Activated CD4-positive, alpha-beta memory T cell treated with anti-CD3 and anti-CD28 coated beads for 36 hours (primary cell): ENCODE measurements at regions of chr11 and their contacts with region 1.

Region 1: GRCh38 chr11:34357701-34358257 is at the start of gene ABTB2:
- DNase-seq: peak; percentile 98
- H3K4me3 Mint-ChIP-seq: peak within 1 kb of the TSS; percentile 77
- H3K27ac Mint-ChIP-seq: no peak within 1 kb of the TSS
- H3K4me1 Mint-ChIP-seq: peaks cover 28% of the 10 kb centered on the region
- H3K27me3 Mint-ChIP-seq: peaks cover 37% of the 10 kb centered on the region
- total RNA-seq, gene ABTB2: 1.8 to 1.9 TPM

Region 2: DNA sequence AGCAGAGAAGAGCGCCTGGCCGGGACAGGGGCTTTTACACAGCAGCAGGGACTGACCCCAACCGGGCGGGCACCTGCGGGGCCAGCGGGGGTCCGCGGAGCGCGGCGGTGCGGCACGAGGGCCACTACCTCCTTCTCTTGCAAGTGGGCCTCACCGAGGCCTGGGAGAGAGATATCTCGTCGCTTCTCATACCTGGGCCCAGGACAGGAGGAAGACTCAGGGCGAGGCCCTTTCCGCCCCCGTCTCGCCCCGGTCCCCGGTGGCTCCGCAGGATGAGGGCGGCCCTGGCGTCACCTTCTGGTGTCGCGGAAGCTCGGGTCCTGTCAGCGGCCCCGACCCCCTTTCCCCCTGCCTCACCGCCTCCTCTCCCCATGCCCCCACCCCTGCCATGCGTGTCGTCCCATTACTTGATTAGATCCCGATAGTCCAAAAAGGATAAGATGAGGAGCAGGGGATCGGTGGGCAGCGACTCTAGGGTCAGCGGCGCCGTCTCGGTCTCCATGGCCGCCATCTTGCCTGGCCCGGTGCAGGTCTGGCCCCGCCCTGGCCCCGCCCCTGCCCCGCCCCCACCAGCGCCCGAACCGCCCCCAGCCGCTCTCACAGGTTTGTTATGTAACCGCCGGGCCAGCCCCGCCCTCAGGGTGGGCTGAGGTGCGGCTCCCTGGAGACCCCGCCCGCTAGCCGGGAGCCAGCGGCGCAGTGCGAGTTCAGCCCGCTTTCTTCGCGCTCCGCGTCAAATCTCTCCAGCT is 583.6 kb before region 1 on chr11 and contains the start of gene FBXO3:
- CTCF ChIA-PET with region 1: no interaction called
- POLR2A ChIA-PET with region 1: no interaction called
- intact Hi-C with region 1: loop called (anchors 1 kb)
- DNase-seq: peak; percentile 84
- H3K4me3 Mint-ChIP-seq: peak within 1 kb of the TSS; percentile 95
- H3K27ac Mint-ChIP-seq: peak within 1 kb of the TSS; percentile 89
- H3K4me1 Mint-ChIP-seq: peaks cover 48% of the 10 kb centered on the region
- H3K27me3 Mint-ChIP-seq: peaks cover 8% of the 10 kb centered on the region
- total RNA-seq, gene FBXO3: 16.5 to 17.7 TPM

Region 3: GRCh38 chr11:33996498-33997454 is 361.0 kb before region 1 on chr11:
- CTCF ChIA-PET with region 1: interaction called, 12 read pairs
- POLR2A ChIA-PET with region 1: no interaction called
- intact Hi-C with region 1: loop called (anchors 1 kb)
- DNase-seq: peak; percentile 81
- H3K4me3 Mint-ChIP-seq: no peak overlapping the region
- H3K27ac Mint-ChIP-seq: no peak overlapping the region
- H3K4me1 Mint-ChIP-seq: peaks cover 11% of the 10 kb centered on the region
- H3K27me3 Mint-ChIP-seq: peaks cover 16% of the 10 kb centered on the region

Region 4: DNA sequence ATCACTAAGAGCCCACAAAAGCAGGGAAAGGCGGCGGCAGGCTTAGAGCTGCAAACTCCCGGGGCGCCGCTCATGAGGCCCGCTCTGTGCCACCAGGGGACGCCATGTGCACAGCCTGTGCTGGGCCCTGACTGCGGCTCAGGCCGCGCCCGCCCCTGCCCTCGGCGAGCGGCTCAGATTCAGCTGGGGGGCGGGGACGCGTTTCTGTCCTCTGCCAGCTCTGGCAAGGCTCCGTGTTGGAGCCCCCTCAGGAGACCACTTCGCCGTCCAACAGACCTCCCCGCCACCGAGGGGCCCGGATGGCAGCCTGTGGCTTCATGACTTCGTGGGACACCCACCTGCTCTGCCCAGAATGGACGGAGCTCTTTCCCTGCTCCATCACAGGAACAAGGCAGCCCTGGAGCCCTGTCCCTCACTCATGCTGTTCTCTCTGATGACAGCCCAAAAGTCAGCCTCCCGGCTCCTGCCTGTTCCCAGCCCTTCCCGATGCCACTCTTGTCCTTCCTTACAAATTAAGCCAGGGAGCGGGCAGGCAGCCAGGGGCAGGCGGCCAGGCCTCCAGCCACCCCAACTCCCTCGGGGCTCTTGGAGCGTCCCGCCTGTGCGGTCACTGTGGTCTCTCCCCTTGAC is 183.3 kb before region 1 on chr11:
- CTCF ChIA-PET with region 1: interaction called, 167 read pairs
- POLR2A ChIA-PET with region 1: interaction called, 10 read pairs
- intact Hi-C with region 1: loop called (anchors 1 kb)
- DNase-seq: peak; percentile 88
- H3K4me3 Mint-ChIP-seq: no peak overlapping the region
- H3K27ac Mint-ChIP-seq: no peak overlapping the region
- H3K4me1 Mint-ChIP-seq: peaks cover 15% of the 10 kb centered on the region
- H3K27me3 Mint-ChIP-seq: peaks cover 2% of the 10 kb centered on the region

Region 5: GRCh38 chr11:34243726-34244464 is 113.9 kb before region 1 on chr11:
- CTCF ChIA-PET with region 1: interaction called, 3 read pairs
- POLR2A ChIA-PET with region 1: interaction called, 3 read pairs
- intact Hi-C with region 1: loop called (anchors 2 kb)
- DNase-seq: peak; percentile 83
- H3K4me3 Mint-ChIP-seq: no peak overlapping the region
- H3K27ac Mint-ChIP-seq: peak overlapping the region; percentile 38
- H3K4me1 Mint-ChIP-seq: peaks cover 74% of the 10 kb centered on the region
- H3K27me3 Mint-ChIP-seq: peaks cover 5% of the 10 kb centered on the region

Region 6: DNA sequence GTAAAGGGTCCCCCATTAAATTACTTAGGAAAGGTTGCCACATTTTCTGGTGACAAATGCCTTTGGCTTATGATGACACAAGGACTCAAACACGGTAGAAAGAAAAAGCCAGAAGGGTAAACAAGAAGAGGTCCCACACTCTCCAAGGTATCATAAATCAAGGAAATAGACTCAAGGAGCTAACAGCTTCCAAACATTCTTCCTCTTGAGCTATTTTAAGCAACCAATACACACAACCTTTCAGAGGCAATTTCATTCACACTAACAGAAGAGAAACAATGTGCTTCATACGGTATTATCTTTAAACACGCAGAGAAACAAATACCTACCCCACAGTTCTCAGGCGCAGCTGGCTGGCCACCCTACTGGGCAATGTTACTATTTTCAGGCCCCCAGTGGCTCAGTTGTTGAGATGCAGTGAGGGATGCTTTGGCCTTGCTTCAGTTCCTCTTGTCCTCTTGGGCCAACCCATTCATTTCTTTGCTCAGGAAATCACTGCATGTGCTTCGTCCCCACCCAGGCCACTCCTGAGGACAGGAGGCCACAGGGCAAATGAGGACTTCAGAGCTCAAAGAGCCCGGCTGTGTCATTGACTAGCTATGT is 15.7 kb before region 1 on chr11:
- CTCF ChIA-PET with region 1: no interaction called
- POLR2A ChIA-PET with region 1: no interaction called
- intact Hi-C with region 1: no loop called
- DNase-seq: no peak
- H3K4me3 Mint-ChIP-seq: no peak overlapping the region
- H3K27ac Mint-ChIP-seq: no peak overlapping the region
- H3K4me1 Mint-ChIP-seq: no peaks in the 10 kb centered on the region
- H3K27me3 Mint-ChIP-seq: no peaks in the 10 kb centered on the region

Region 7: GRCh38 chr11:34492806-34493414 is 135.1 kb after region 1 on chr11:
- CTCF ChIA-PET with region 1: interaction called, 4 read pairs
- POLR2A ChIA-PET with region 1: no interaction called
- intact Hi-C with region 1: loop called (anchors 2 kb)
- DNase-seq: peak; percentile 51
- H3K4me3 Mint-ChIP-seq: no peak overlapping the region
- H3K27ac Mint-ChIP-seq: no peak overlapping the region
- H3K4me1 Mint-ChIP-seq: no peaks in the 10 kb centered on the region
- H3K27me3 Mint-ChIP-seq: peaks cover 3% of the 10 kb centered on the region